CD4-positive, alpha-beta memory T cell (primary cell): ENCODE measurements at regions of chr16 and their contacts with region 1.

Region 1: DNA sequence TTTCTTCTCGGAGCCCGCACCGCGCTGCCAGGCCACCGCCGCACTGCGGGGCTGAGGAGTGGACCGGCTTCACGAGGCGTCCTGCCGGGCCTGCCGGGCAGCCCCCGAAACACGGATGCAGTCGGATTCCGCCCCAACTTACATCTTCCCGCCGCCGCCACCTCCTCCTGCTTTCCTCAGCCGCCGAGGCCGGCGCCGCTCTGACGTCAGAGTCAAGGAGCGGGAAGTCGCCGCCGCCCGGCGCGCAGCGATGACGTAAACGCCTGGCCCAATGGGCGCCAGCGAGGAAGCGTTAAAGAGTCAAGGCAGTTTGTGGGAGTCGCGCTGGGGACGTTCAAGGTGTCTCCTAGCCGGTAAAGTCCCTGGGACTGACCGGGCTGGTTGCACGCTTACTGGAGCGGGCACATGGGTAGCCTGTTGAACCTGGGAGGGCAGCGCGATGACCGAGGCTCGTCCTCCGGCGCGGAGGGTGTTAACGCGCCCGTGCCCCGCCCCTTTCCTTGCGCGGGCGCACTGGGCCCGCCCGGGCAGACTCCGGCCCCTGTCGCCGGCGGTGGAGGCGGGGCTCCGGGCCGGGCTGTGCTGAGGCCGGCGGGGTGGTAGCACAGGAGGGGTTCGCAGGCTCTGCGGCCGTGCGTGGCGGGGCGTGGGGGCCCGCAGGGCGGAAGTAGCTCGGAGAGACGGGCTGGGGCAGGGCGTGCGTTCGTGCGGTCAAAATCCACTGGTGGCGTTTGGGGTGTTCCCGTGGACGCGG is at the start of gene RNPS1:
- DNase-seq: peak; percentile 95 to 98 (median 95)
- H3K4me3 ChIP-seq: peak within 1 kb of the TSS; percentile 69 to 99
- H3K4me3 Mint-ChIP-seq: peak within 1 kb of the TSS; percentile 94 to 98 (median 96)
- H3K27ac ChIP-seq: peak within 1 kb of the TSS; percentile 88
- H3K27ac Mint-ChIP-seq: peak within 1 kb of the TSS; percentile 98 to 99 (median 98)
- H3K4me1 ChIP-seq: peaks cover 35% of the 10 kb centered on the region
- H3K4me1 Mint-ChIP-seq: peaks cover 25 to 54% (median 35%) of the 10 kb centered on the region in 4 donors
- H3K27me3 ChIP-seq: no peaks in the 10 kb centered on the region
- H3K27me3 Mint-ChIP-seq: peaks cover 0 to 3% of the 10 kb centered on the region in 2 donors
- total RNA-seq, gene RNPS1: 151 to 152 TPM

Region 2: GRCh38 chr16:1971796-1972489 is 296.1 kb before region 1 on chr16 and contains the start of gene TBL3:
- CTCF ChIA-PET with region 1: no interaction called
- POLR2A ChIA-PET with region 1: no interaction called
- intact Hi-C with region 1: loop called (anchors 1 kb)
- DNase-seq: peak; percentile 97 to 98 (median 97)
- H3K4me3 ChIP-seq: peak within 1 kb of the TSS; percentile 55 to 73
- H3K4me3 Mint-ChIP-seq: peak within 1 kb of the TSS; percentile 94 to 99 (median 96)
- H3K27ac ChIP-seq: peak within 1 kb of the TSS; percentile 70
- H3K27ac Mint-ChIP-seq: peak within 1 kb of the TSS; percentile 89 to 99 (median 97)
- H3K4me1 ChIP-seq: peaks cover 27% of the 10 kb centered on the region
- H3K4me1 Mint-ChIP-seq: peaks cover 8 to 22% (median 16%) of the 10 kb centered on the region in 4 donors
- H3K27me3 ChIP-seq: no peaks in the 10 kb centered on the region
- H3K27me3 Mint-ChIP-seq: peaks cover 0 to 5% of the 10 kb centered on the region in 2 donors
- total RNA-seq, gene TBL3: 33.2 to 35.0 TPM

Region 3: GRCh38 chr16:2194852-2195321 is 73.2 kb before region 1 on chr16:
- CTCF ChIA-PET with region 1: interaction called, 6 read pairs
- POLR2A ChIA-PET with region 1: interaction called, 3 read pairs
- intact Hi-C with region 1: loop called (anchors 2 kb)
- DNase-seq: peak; percentile 55 to 61 (median 57)
- H3K4me3 ChIP-seq: no peak overlapping the region
- H3K4me3 Mint-ChIP-seq: peak overlapping the region in 4 of 8 donors; percentile 49 to 80 (median 64)
- H3K27ac ChIP-seq: no peak overlapping the region
- H3K27ac Mint-ChIP-seq: peak overlapping the region in 1 of 7 donors; percentile 55
- H3K4me1 ChIP-seq: peaks cover 11% of the 10 kb centered on the region
- H3K4me1 Mint-ChIP-seq: peaks cover 2 to 13% (median 7%) of the 10 kb centered on the region in 4 donors
- H3K27me3 ChIP-seq: peaks cover 30% of the 10 kb centered on the region
- H3K27me3 Mint-ChIP-seq: peaks cover 15 to 19% of the 10 kb centered on the region in 2 donors

Region 4: DNA sequence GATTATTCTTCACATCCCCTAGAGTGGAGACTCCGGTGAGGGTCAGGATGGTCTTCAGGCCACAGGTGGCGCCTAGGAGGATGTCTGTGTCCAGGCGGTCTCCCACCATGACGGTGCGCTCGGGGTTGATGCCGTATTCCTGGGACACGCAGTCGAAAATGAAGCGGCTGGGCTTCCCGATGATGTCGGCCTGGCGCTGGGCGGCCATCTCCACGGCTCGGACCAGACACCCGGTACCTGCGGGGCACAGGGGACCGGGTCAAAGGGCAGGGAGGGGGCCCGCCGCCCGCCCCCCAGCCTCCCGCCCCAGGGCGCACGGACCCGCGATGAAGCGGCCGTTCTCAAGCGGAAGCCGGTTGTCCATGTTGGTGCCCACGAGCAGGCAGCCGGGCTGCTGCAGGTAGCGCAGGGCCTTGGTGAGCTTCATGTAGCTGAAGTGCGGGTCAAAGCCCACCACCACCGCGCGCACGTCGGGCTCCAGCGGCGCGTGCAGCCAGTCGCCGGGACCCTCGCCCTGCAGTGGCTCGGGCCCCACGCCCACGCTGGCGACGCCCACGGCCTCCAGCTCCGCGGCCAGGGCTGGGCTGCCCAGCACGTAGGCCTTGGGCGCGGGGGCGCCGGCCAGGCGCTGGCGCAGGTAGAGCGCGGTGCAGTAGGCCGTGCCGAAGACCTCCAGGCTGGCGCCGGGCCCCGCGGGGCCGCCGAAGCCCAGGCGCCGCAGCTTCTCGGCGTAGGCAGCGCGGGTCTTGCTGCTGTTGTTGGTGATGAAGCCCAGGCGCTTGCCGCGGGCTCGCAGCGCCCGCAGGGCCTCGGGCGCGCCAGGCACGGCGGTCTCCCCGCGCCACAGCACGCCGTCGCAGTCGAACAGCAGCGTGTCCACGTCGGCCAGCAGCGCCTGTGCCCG is 54.0 kb before region 1 on chr16:
- CTCF ChIA-PET with region 1: no interaction called
- POLR2A ChIA-PET with region 1: interaction called, 5 read pairs
- intact Hi-C with region 1: loop called (anchors 2 kb)
- DNase-seq: no peak
- H3K4me3 ChIP-seq: peak overlapping the region in 1 of 2 donors; percentile 51
- H3K4me3 Mint-ChIP-seq: peak overlapping the region; percentile 74 to 80 (median 77)
- H3K27ac ChIP-seq: peak overlapping the region; percentile 55
- H3K27ac Mint-ChIP-seq: peak overlapping the region in 4 of 7 donors; percentile 13 to 83 (median 28)
- H3K4me1 ChIP-seq: peaks cover 20% of the 10 kb centered on the region
- H3K4me1 Mint-ChIP-seq: peaks cover 8 to 27% (median 17%) of the 10 kb centered on the region in 4 donors
- H3K27me3 ChIP-seq: no peaks in the 10 kb centered on the region
- H3K27me3 Mint-ChIP-seq: no peaks in the 10 kb centered on the region

Region 5: DNA sequence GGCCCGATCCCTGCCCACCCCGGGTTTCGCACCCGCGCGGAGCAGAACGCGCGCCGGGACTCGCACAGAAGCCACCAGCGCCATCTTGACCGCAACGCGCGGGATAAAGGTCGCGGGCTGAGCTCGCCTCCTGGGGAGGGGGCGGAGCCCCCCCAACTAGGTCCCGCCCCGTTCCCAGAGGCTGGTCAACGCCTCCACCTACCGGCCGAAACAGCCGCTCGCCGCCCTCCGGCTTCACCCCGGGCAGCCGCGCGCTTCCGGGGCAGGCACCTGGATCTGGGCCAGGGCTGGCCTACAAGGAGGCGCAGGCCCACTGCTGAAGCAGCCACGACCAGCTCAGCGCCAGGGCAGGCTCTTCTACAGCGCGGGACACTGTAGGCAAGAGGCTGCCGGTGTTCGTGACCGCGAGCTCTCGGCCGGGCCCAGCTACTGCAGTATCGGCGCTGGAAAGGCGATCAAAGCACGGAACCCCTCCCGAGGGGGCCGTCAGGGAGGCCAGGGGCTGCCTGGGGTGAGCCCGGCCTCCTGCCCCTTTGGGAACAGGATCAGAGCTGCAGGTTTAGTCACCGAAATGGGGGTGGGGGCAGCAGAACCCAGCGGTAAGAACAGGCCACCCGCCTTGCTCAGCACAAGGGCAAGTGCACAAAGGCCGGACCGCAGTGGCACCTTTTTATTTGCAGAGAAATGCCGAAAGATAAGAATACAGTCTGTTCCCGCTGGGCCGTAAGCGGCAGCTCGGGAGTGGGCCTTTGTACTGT is 16.4 kb before region 1 on chr16 and contains the start of gene ECI1:
- CTCF ChIA-PET with region 1: interaction called, 4 read pairs
- POLR2A ChIA-PET with region 1: interaction called, 20 read pairs
- intact Hi-C with region 1: loop called (anchors 1 kb)
- DNase-seq: peak; percentile 65 to 81 (median 72)
- H3K4me3 ChIP-seq: peak within 1 kb of the TSS in 1 of 2 donors; percentile 66
- H3K4me3 Mint-ChIP-seq: peak within 1 kb of the TSS; percentile 87 to 93 (median 90)
- H3K27ac ChIP-seq: peak within 1 kb of the TSS; percentile 61
- H3K27ac Mint-ChIP-seq: peak within 1 kb of the TSS; percentile 88 to 96 (median 91)
- H3K4me1 ChIP-seq: peaks cover 10% of the 10 kb centered on the region
- H3K4me1 Mint-ChIP-seq: peaks cover 1 to 12% (median 5%) of the 10 kb centered on the region in 4 donors
- H3K27me3 ChIP-seq: no peaks in the 10 kb centered on the region
- H3K27me3 Mint-ChIP-seq: no peaks in the 10 kb centered on the region
- total RNA-seq, gene ECI1: 33.0 to 36.6 TPM

Region 6: DNA sequence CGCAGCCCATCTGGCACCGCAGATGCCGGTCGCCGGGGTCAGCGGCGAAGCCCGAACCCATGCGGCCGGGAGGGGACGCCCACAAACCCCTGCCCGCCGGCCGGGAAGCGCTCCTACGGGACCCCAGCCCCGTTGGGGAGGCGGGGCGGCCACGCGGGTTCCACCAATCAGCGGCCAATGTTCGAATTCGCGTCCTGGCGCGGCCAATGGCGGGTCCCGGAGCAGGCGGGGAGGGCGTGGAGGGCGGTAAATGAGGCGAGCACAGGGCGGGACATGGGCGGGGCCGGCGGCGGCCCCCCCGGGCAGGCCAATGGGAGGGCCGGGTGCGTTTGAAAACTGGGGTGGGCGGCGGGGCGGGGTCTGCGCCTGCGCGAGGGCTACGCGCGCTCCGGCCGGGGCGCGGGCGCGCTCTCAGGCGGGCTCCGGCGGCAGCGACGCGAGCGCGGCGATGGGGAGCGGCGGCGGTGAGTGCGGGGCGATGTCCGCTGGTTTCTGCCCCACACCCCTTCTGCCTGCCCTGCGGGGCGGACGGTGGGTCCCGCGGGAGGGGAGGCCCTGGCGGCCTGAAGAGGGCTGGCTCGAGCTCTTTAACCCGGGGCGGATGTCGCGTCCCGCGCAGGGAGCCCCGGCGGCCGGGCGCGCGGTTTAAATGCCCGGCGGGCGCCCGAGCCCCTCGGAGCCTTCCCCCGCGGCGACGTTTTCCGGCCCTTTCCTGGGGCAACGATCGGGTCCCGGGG is 161.1 kb after region 1 on chr16 and contains the start of gene CCNF:
- CTCF ChIA-PET with region 1: no interaction called
- POLR2A ChIA-PET with region 1: no interaction called
- intact Hi-C with region 1: loop called (anchors 1 kb)
- DNase-seq: peak; percentile 91 to 96 (median 93)
- H3K4me3 ChIP-seq: peak within 1 kb of the TSS; percentile 58 to 76
- H3K4me3 Mint-ChIP-seq: peak within 1 kb of the TSS; percentile 88 to 93 (median 90)
- H3K27ac ChIP-seq: peak within 1 kb of the TSS; percentile 67
- H3K27ac Mint-ChIP-seq: peak within 1 kb of the TSS; percentile 70 to 91 (median 85)
- H3K4me1 ChIP-seq: peaks cover 20% of the 10 kb centered on the region
- H3K4me1 Mint-ChIP-seq: peaks cover 14 to 25% (median 16%) of the 10 kb centered on the region in 4 donors
- H3K27me3 ChIP-seq: no peaks in the 10 kb centered on the region
- H3K27me3 Mint-ChIP-seq: no peaks in the 10 kb centered on the region
- total RNA-seq, gene CCNF: 4.7 TPM